ENCODE measurements at regions of chr11 and their contacts with region 1.

Region 1: DNA sequence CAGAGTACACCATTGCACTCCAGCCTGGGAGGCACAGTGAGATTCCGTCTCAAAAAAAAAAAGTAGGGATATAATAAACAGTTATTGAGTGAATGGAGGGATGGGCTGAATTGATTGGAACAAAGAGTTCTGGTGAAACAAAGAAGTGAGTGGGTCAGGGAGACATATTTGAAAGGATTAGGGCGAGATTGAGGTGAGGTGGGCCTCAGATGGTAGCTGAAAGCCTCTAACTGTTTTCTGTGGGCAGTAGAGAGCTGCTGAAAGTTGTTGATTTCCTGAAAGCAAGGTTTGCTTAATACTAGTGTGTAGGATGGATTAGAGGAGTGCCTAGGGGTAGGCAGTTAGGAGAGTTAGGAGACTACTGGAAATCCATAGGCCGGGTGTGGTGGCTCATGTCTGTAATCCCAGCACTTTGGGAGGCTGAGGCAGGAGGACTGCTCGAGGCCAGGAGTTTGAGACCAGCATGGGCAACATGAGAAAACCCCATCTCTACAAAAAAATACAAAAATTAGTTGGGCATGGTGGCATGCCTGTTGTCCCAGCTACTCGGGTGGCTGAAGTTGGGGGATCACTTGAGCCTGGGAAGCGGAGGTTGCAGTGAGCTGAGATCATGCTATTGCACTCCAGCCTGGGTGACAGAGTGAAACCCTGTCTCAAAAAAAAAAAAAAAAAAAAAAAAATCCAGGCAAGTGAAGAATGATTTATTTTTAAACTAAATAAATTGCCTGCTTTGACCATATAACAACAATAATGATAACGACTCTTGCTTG is 41.4 kb upstream of the PTPRJ start:
- DNase-seq: no peak
- H3K4me3 ChIP-seq: no peak overlapping the region
- H3K4me3 Mint-ChIP-seq: no peak overlapping the region
- H3K27ac ChIP-seq: no peak overlapping the region
- H3K27ac Mint-ChIP-seq: no peak overlapping the region
- H3K4me1 ChIP-seq: peaks cover 44 to 51% of the 10 kb centered on the region in 2 donors
- H3K4me1 Mint-ChIP-seq: peaks cover 51% of the 10 kb centered on the region
- H3K27me3 ChIP-seq: no peaks in the 10 kb centered on the region
- H3K27me3 Mint-ChIP-seq: peaks cover 0 to 2% (median 0%) of the 10 kb centered on the region in 3 donors
- CTCF ChIP-seq: no peak

Region 2: GRCh38 chr11:47766305-47767227 is 172.4 kb before region 1 on chr11:
- intact Hi-C with region 1: no loop called
- DNase-seq: peak; percentile 51 to 80 (median 62)
- H3K4me3 ChIP-seq: peak overlapping the region; percentile 80 to 99 (median 80)
- H3K4me3 Mint-ChIP-seq: peak overlapping the region; percentile 88 to 92
- H3K27ac ChIP-seq: peak overlapping the region; percentile 91 to 93
- H3K27ac Mint-ChIP-seq: peak overlapping the region; percentile 94 to 100 (median 97)
- H3K4me1 ChIP-seq: peaks cover 17 to 18% of the 10 kb centered on the region in 2 donors
- H3K4me1 Mint-ChIP-seq: peaks cover 19% of the 10 kb centered on the region
- H3K27me3 ChIP-seq: no peaks in the 10 kb centered on the region
- H3K27me3 Mint-ChIP-seq: peaks cover 0 to 3% (median 0%) of the 10 kb centered on the region in 3 donors
- CTCF ChIP-seq: no peak

Region 3: GRCh38 chr11:47971501-47971900 is 32.5 kb after region 1 on chr11:
- intact Hi-C with region 1: loop called in 1 of 2 experiments (anchors 5 kb)
- DNase-seq: no peak
- H3K4me3 ChIP-seq: no peak overlapping the region
- H3K4me3 Mint-ChIP-seq: no peak overlapping the region
- H3K27ac ChIP-seq: no peak overlapping the region
- H3K27ac Mint-ChIP-seq: no peak overlapping the region
- H3K4me1 ChIP-seq: peaks cover 27 to 36% of the 10 kb centered on the region in 2 donors
- H3K4me1 Mint-ChIP-seq: peaks cover 22% of the 10 kb centered on the region
- H3K27me3 ChIP-seq: no peaks in the 10 kb centered on the region
- H3K27me3 Mint-ChIP-seq: peaks cover 0 to 4% (median 3%) of the 10 kb centered on the region in 3 donors
- CTCF ChIP-seq: no peak